T-cell (primary cell): ENCODE measurements at regions of chr2 and their contacts with region 1.

Region 1: GRCh38 chr2:30208452-30208851 is 22.9 kb upstream of the LBH start:
- DNase-seq: peak in 13 of 35 experiments; percentile 14 to 72 (median 28)
- ATAC-seq: peak; percentile 54 to 60 (median 57)
- H3K4me3 ChIP-seq: no peak overlapping the region
- H3K4me3 Mint-ChIP-seq: peak overlapping the region in 2 of 3 donors; percentile 18 to 74
- H3K27ac ChIP-seq: peak overlapping the region; percentile 25
- H3K27ac Mint-ChIP-seq: peak overlapping the region; percentile 81 to 85
- H3K4me1 ChIP-seq: peaks cover 14 to 17% of the 10 kb centered on the region in 2 experiments
- H3K4me1 Mint-ChIP-seq: peaks cover 23% of the 10 kb centered on the region in 3 donors
- H3K27me3 ChIP-seq: no peaks in the 10 kb centered on the region
- H3K27me3 Mint-ChIP-seq: no peaks in the 10 kb centered on the region

Region 2: DNA sequence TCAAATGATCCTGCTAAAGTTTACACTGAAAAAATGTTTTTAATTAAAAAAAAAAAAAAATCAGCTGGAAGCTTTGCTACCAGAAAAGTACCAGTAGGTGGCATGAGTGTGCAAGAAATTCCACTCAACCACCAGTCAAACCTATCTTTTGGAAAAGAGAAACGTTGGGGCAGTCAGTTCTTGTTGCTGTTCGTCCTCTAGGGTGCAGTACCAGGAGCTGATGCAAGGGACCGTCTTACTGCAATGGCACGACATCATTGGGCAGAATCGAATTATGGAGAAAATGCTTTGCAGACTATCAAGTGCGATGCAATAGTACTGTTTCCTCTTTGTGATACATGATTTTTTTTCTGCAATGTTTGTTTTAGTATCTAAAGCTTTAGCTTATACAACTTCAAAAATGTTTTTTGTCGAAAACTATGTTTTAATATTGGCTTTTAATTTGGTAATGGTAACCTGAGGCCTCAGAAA is 43.4 kb before region 1 on chr2:
- CTCF ChIA-PET with region 1: interaction called, 7 to 26 read pairs
- POLR2A ChIA-PET with region 1: interaction called, 3 read pairs
- DNase-seq: peak in 34 of 35 experiments; percentile 6 to 89 (median 66)
- ATAC-seq: peak; percentile 43 to 96 (median 92)
- H3K4me3 ChIP-seq: no peak overlapping the region
- H3K4me3 Mint-ChIP-seq: peak overlapping the region in 1 of 3 donors; percentile 34
- H3K27ac ChIP-seq: no peak overlapping the region
- H3K27ac Mint-ChIP-seq: no peak overlapping the region
- H3K4me1 ChIP-seq: peaks cover 0 to 3% of the 10 kb centered on the region in 2 experiments
- H3K4me1 Mint-ChIP-seq: peaks cover 8 to 33% (median 11%) of the 10 kb centered on the region in 3 donors
- H3K27me3 ChIP-seq: no peaks in the 10 kb centered on the region
- H3K27me3 Mint-ChIP-seq: no peaks in the 10 kb centered on the region

Region 3: DNA sequence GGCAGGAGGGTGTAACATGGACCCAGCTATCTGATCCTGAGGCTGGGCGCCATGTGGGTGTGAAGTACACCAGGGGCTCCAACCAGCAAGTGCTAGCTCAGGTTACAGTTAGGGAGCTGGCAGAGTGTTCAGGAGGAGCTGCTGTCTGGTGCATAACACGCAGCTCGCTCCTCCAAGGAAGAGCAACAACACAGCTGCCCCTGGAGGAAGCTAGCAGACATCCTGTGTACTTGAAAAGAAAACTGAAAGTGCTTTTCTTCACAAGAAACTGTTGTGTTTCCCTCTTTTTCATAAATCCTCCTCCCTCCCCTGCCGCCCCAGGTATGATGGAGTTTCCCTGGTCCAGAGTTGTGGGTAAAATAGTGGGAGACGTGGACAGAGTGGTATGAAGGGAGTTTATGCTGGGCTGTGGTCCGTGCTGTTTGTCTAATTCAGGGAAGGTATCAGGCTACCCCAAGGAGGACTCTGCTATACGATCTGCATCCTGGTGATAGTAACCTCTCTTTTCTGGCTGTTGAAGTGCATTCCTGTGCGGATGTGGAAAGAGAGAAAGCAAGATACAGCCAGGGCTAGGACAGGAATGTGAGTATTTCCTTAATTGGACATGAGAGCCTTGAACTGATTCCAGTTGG is 16.8 kb after region 1 on chr2:
- CTCF ChIA-PET with region 1: interaction called, 7 to 25 read pairs
- POLR2A ChIA-PET with region 1: interaction called, 3 to 5 read pairs
- DNase-seq: peak in 32 of 35 experiments; percentile 21 to 78 (median 46)
- ATAC-seq: peak; percentile 83 to 86 (median 86)
- H3K4me3 ChIP-seq: peak overlapping the region; percentile 50 to 67
- H3K4me3 Mint-ChIP-seq: peak overlapping the region; percentile 85 to 97 (median 95)
- H3K27ac ChIP-seq: peak overlapping the region; percentile 96
- H3K27ac Mint-ChIP-seq: peak overlapping the region; percentile 98 to 100
- H3K4me1 ChIP-seq: peaks cover 44 to 72% of the 10 kb centered on the region in 2 experiments
- H3K4me1 Mint-ChIP-seq: peaks cover 77 to 84% (median 80%) of the 10 kb centered on the region in 3 donors
- H3K27me3 ChIP-seq: no peaks in the 10 kb centered on the region
- H3K27me3 Mint-ChIP-seq: no peaks in the 10 kb centered on the region

Region 4: GRCh38 chr2:30239308-30239985 is 31.0 kb after region 1 on chr2:
- CTCF ChIA-PET with region 1: interaction called, 12 to 42 read pairs
- POLR2A ChIA-PET with region 1: interaction called in 1 of 2 experiments, 3 read pairs
- DNase-seq: peak; percentile 51 to 92 (median 71)
- ATAC-seq: peak; percentile 43 to 68 (median 55)
- H3K4me3 ChIP-seq: peak overlapping the region in 1 of 2 donors; percentile 2
- H3K4me3 Mint-ChIP-seq: peak overlapping the region; percentile 64 to 98 (median 79)
- H3K27ac ChIP-seq: peak overlapping the region; percentile 40
- H3K27ac Mint-ChIP-seq: peak overlapping the region; percentile 82 to 96
- H3K4me1 ChIP-seq: peaks cover 64 to 90% of the 10 kb centered on the region in 2 experiments
- H3K4me1 Mint-ChIP-seq: peaks cover 89 to 95% (median 93%) of the 10 kb centered on the region in 3 donors
- H3K27me3 ChIP-seq: no peaks in the 10 kb centered on the region
- H3K27me3 Mint-ChIP-seq: no peaks in the 10 kb centered on the region

Region 5: DNA sequence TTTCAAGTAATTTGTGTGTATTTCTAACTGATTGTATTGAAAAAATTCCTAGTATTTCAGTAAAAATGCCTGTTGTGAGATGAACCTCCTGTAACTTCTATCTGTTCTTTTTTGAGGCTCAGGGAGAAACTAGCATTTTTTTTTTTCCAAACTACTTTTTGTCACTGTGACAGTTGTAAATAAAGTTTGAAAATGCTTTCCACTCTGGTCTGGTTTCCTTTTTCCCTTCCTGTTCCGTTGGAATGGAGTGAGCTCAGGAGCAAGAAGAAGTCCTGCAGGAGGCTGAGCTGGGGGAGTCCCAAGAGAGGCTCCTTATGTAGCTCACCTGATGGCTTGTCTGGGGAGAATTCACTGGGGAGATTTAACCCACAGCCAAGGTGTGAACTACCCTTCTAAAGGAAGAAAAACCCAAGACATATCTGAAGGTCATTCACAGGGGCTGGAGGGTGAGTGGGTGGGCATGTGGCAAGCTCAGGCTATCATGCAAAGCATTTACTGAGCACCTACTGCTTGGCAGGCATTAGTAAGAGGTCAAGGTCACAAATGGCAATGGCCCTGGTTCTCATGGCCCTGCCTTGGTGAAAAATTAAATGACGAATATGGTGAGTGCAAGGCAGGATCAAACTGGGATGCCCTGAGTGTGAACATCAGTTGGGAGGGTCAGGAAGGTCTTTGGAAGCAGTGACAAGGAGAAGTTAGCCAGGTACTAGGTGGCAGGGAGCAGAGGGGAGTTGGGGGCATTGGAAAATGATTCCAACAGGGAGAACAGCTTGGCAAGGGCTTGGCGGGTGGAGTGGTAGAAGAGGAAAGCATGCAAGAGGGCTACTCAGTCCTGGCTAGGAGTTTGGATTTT is 51.6 kb after region 1 on chr2:
- CTCF ChIA-PET with region 1: no interaction called
- POLR2A ChIA-PET with region 1: no interaction called
- DNase-seq: no peak
- ATAC-seq: no peak
- H3K4me3 ChIP-seq: no peak overlapping the region
- H3K4me3 Mint-ChIP-seq: peak overlapping the region in 1 of 3 donors; percentile 78
- H3K27ac ChIP-seq: peak overlapping the region; percentile 58
- H3K27ac Mint-ChIP-seq: peak overlapping the region; percentile 94 to 99
- H3K4me1 ChIP-seq: peaks cover 70 to 82% of the 10 kb centered on the region in 2 experiments
- H3K4me1 Mint-ChIP-seq: peaks cover 93 to 96% (median 94%) of the 10 kb centered on the region in 3 donors
- H3K27me3 ChIP-seq: no peaks in the 10 kb centered on the region
- H3K27me3 Mint-ChIP-seq: no peaks in the 10 kb centered on the region

Region 6: GRCh38 chr2:30472326-30472725 is 263.9 kb after region 1 on chr2:
- CTCF ChIA-PET with region 1: interaction called, 3 to 25 read pairs
- POLR2A ChIA-PET with region 1: no interaction called
- DNase-seq: no peak
- ATAC-seq: no peak
- H3K4me3 ChIP-seq: no peak overlapping the region
- H3K4me3 Mint-ChIP-seq: no peak overlapping the region
- H3K27ac ChIP-seq: no peak overlapping the region
- H3K27ac Mint-ChIP-seq: no peak overlapping the region
- H3K4me1 ChIP-seq: peaks cover 0 to 12% of the 10 kb centered on the region in 2 experiments
- H3K4me1 Mint-ChIP-seq: peaks cover 39 to 62% (median 45%) of the 10 kb centered on the region in 3 donors
- H3K27me3 ChIP-seq: no peaks in the 10 kb centered on the region
- H3K27me3 Mint-ChIP-seq: no peaks in the 10 kb centered on the region